B cell (primary cell): ENCODE measurements at regions of chr12 and their contacts with region 1.

Region 1: DNA sequence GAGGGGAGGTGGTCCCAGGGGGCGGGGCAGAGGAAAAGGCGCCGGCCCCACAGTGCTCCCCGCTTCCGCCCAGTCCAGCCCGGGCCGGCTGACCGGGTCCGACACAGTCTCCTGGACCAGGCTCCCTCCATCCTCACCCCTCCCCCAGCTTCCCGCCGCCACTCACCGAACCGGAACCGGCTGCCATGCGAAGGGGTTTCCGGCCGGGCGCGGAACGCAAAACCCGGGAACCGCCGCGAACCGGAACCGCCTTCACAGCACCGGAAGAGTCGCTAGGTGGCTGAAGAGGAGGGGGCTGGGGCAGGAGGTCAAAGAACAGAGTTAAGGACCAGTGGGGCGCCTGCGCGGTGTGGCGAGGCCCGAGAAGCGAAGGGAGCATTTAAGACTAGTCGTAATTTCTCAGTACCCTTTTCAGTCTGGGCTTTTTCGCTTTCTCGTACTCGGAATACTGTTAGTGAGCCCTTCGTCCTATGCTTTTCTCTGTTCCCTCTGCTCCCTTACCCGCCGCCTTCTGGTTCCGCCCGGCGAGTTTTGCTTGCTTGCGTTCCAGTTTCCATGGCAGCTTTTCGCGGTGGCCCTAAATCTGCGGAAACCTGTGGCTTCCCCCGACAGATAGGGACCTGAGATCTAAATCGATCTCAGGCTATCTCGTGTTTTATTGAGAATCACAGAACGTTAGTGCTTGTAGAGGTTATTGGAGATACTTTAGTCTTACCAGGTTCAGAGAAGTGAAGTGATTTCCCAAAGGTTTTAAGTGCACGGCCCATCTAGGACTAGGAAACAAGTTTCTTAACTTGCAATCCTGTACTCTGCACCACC is at the start of gene SENP1:
- DNase-seq: peak; percentile 96
- ATAC-seq: peak; percentile 78
- H3K4me3 ChIP-seq: peak within 1 kb of the TSS; percentile 61 to 94 (median 80)
- H3K4me3 Mint-ChIP-seq: peak within 1 kb of the TSS; percentile 89
- H3K27ac ChIP-seq: peak within 1 kb of the TSS; percentile 93 to 99
- H3K27ac Mint-ChIP-seq: peak within 1 kb of the TSS; percentile 95
- H3K4me1 ChIP-seq: peaks cover 20% of the 10 kb centered on the region in 2 donors
- H3K4me1 Mint-ChIP-seq: peaks cover 38% of the 10 kb centered on the region
- H3K27me3 ChIP-seq: no peaks in the 10 kb centered on the region
- H3K27me3 Mint-ChIP-seq: no peaks in the 10 kb centered on the region
- CTCF ChIP-seq: peak; percentile 28
- total RNA-seq, gene SENP1: 43.8 and 44.8 TPM in 2 replicates

Region 2: DNA sequence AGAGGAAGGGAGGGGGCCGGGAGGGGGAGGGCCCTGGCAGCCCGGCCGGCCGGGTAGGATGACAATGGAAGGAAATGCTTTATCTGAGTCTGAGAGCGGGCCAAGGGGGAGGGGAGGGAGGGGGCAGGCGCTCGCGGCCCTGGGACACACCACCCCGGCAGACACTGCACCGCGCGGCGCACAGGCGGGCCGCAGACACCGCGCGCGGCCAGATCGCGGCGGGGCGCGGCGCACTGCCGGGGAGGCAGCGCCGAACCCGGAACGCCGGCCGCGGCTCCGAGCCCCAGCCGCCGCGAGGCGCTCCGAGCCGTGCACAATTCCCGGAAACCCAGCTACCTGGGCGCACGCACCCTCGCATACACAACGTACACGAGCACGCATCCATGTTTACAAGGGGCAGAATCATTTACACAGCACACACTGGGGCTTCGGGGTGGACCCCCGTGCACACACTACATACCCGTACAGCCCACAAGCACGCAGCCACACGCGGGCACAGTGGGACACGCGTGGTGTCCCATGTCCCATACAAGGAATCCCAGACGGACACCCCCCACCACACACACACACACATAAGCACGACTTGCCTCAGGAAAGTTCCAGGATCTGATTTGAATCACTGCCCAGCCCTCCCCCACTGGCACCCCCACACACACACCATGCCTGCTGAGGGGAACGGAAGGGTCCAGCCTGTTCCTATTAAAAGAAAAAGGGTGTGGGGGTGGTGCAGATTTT is 286.0 kb before region 1 on chr12 and contains the start of gene HDAC7:
- CTCF ChIA-PET with region 1: no interaction called
- POLR2A ChIA-PET with region 1: no interaction called
- intact Hi-C with region 1: loop called (anchors 5 kb)
- DNase-seq: peak; percentile 82
- ATAC-seq: peak; percentile 74
- H3K4me3 ChIP-seq: peak within 1 kb of the TSS; percentile 58 to 76 (median 73)
- H3K4me3 Mint-ChIP-seq: peak within 1 kb of the TSS; percentile 96
- H3K27ac ChIP-seq: peak within 1 kb of the TSS; percentile 67 to 96
- H3K27ac Mint-ChIP-seq: peak within 1 kb of the TSS; percentile 97
- H3K4me1 ChIP-seq: peaks cover 51 to 64% of the 10 kb centered on the region in 2 donors
- H3K4me1 Mint-ChIP-seq: peaks cover 67% of the 10 kb centered on the region
- H3K27me3 ChIP-seq: no peaks in the 10 kb centered on the region
- H3K27me3 Mint-ChIP-seq: no peaks in the 10 kb centered on the region
- CTCF ChIP-seq: no peak
- total RNA-seq, gene HDAC7: 175 and 178 TPM in 2 replicates

Region 3: DNA sequence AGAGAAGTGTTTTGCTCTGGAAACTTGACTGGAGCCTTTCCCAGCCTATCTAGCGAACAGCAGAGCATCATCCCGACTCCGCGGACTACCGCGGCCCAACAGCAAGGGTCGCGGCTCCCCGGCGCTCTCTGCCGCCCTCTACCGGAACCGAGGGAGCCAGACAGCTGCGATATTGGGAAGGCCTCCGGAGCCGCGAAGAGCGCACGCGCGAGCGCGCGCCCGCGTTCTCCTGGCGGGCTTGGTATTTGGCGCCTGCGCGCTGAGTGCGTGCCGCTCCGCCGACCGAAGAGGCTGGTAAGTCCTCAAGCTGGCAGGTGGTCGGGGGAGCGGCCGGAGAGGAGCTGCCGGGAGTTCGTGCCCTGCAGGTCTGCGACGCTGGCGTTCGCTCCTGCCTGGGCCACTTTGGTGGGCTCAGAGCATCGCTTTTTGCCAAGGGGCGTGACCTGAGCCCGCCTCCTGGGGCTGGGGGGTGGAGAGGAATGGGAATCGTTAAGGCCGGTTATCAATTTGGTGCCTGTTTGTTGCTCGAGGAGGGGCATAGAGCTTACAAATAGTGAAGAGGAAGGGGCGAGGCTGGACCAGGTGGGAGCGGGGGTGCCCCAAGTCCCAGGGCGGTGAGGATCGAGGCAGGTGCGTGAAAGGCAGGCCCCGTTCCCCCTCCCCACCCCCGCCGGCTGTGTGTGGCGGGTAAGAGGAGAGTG is 142.6 kb before region 1 on chr12 and contains the start of gene TMEM106C:
- CTCF ChIA-PET with region 1: no interaction called
- POLR2A ChIA-PET with region 1: no interaction called
- intact Hi-C with region 1: loop called (anchors 5 kb)
- DNase-seq: peak; percentile 97
- ATAC-seq: peak; percentile 99
- H3K4me3 ChIP-seq: peak within 1 kb of the TSS; percentile 68 to 96 (median 75)
- H3K4me3 Mint-ChIP-seq: peak within 1 kb of the TSS; percentile 96
- H3K27ac ChIP-seq: peak within 1 kb of the TSS; percentile 17 to 67
- H3K27ac Mint-ChIP-seq: peak within 1 kb of the TSS; percentile 86
- H3K4me1 ChIP-seq: peaks cover 6 to 14% of the 10 kb centered on the region in 2 donors
- H3K4me1 Mint-ChIP-seq: peaks cover 25% of the 10 kb centered on the region
- H3K27me3 ChIP-seq: no peaks in the 10 kb centered on the region
- H3K27me3 Mint-ChIP-seq: peaks cover 16% of the 10 kb centered on the region
- CTCF ChIP-seq: peak; percentile 94
- total RNA-seq, gene TMEM106C: 32.9 and 37.5 TPM in 2 replicates

Region 4: GRCh38 chr12:48037267-48037915 is 68.7 kb before region 1 on chr12:
- CTCF ChIA-PET with region 1: no interaction called
- POLR2A ChIA-PET with region 1: no interaction called
- intact Hi-C with region 1: no loop called
- DNase-seq: no peak
- ATAC-seq: no peak
- H3K4me3 ChIP-seq: no peak overlapping the region
- H3K4me3 Mint-ChIP-seq: no peak overlapping the region
- H3K27ac ChIP-seq: no peak overlapping the region
- H3K27ac Mint-ChIP-seq: no peak overlapping the region
- H3K4me1 ChIP-seq: peaks cover 5 to 13% of the 10 kb centered on the region in 2 donors
- H3K4me1 Mint-ChIP-seq: peaks cover 20% of the 10 kb centered on the region
- H3K27me3 ChIP-seq: no peaks in the 10 kb centered on the region
- H3K27me3 Mint-ChIP-seq: no peaks in the 10 kb centered on the region
- CTCF ChIP-seq: no peak

Region 5: GRCh38 chr12:48060474-48060873 is 45.6 kb before region 1 on chr12:
- CTCF ChIA-PET with region 1: no interaction called
- POLR2A ChIA-PET with region 1: no interaction called
- intact Hi-C with region 1: no loop called
- DNase-seq: no peak
- ATAC-seq: no peak
- H3K4me3 ChIP-seq: no peak overlapping the region
- H3K4me3 Mint-ChIP-seq: no peak overlapping the region
- H3K27ac ChIP-seq: no peak overlapping the region
- H3K27ac Mint-ChIP-seq: no peak overlapping the region
- H3K4me1 ChIP-seq: no peaks in the 10 kb centered on the region
- H3K4me1 Mint-ChIP-seq: no peaks in the 10 kb centered on the region
- H3K27me3 ChIP-seq: no peaks in the 10 kb centered on the region
- H3K27me3 Mint-ChIP-seq: no peaks in the 10 kb centered on the region
- CTCF ChIP-seq: no peak

Region 6: GRCh38 chr12:48071808-48072207 is 34.3 kb before region 1 on chr12:
- CTCF ChIA-PET with region 1: no interaction called
- POLR2A ChIA-PET with region 1: interaction called, 12 read pairs
- intact Hi-C with region 1: no loop called
- DNase-seq: no peak
- ATAC-seq: no peak
- H3K4me3 ChIP-seq: no peak overlapping the region
- H3K4me3 Mint-ChIP-seq: no peak overlapping the region
- H3K27ac ChIP-seq: no peak overlapping the region
- H3K27ac Mint-ChIP-seq: no peak overlapping the region
- H3K4me1 ChIP-seq: no peaks in the 10 kb centered on the region
- H3K4me1 Mint-ChIP-seq: no peaks in the 10 kb centered on the region
- H3K27me3 ChIP-seq: no peaks in the 10 kb centered on the region
- H3K27me3 Mint-ChIP-seq: no peaks in the 10 kb centered on the region
- CTCF ChIP-seq: no peak

Region 7: GRCh38 chr12:48119078-48119833 is 13.2 kb after region 1 on chr12 and contains the start of gene PFKM:
- CTCF ChIA-PET with region 1: interaction called, 18 read pairs
- POLR2A ChIA-PET with region 1: interaction called, 3 read pairs
- intact Hi-C with region 1: loop called (anchors 1 kb)
- DNase-seq: peak; percentile 81
- ATAC-seq: peak; percentile 99
- H3K4me3 ChIP-seq: peak within 1 kb of the TSS; percentile 73 to 94 (median 86)
- H3K4me3 Mint-ChIP-seq: peak within 1 kb of the TSS; percentile 96
- H3K27ac ChIP-seq: peak within 1 kb of the TSS; percentile 21 to 62
- H3K27ac Mint-ChIP-seq: peak within 1 kb of the TSS; percentile 85
- H3K4me1 ChIP-seq: peaks cover 7 to 12% of the 10 kb centered on the region in 2 donors
- H3K4me1 Mint-ChIP-seq: peaks cover 19% of the 10 kb centered on the region
- H3K27me3 ChIP-seq: no peaks in the 10 kb centered on the region
- H3K27me3 Mint-ChIP-seq: no peaks in the 10 kb centered on the region
- CTCF ChIP-seq: no peak
- total RNA-seq, gene PFKM: 42.5 and 43.0 TPM in 2 replicates

Region 8: GRCh38 chr12:48157018-48157888 is 51.2 kb after region 1 on chr12 and contains the start of gene ASB8:
- CTCF ChIA-PET with region 1: interaction called, 28 read pairs
- POLR2A ChIA-PET with region 1: interaction called, 10 read pairs
- intact Hi-C with region 1: loop called (anchors 1 kb)
- DNase-seq: peak; percentile 99
- ATAC-seq: peak; percentile 91
- H3K4me3 ChIP-seq: peak within 1 kb of the TSS; percentile 81 to 98 (median 88)
- H3K4me3 Mint-ChIP-seq: peak within 1 kb of the TSS; percentile 99
- H3K27ac ChIP-seq: peak within 1 kb of the TSS; percentile 67 to 84
- H3K27ac Mint-ChIP-seq: peak within 1 kb of the TSS; percentile 99
- H3K4me1 ChIP-seq: peaks cover 14 to 15% of the 10 kb centered on the region in 2 donors
- H3K4me1 Mint-ChIP-seq: peaks cover 21% of the 10 kb centered on the region
- H3K27me3 ChIP-seq: no peaks in the 10 kb centered on the region
- H3K27me3 Mint-ChIP-seq: no peaks in the 10 kb centered on the region
- CTCF ChIP-seq: peak; percentile 64
- total RNA-seq, gene ASB8: 53.2 and 54.8 TPM in 2 replicates

Region 9: DNA sequence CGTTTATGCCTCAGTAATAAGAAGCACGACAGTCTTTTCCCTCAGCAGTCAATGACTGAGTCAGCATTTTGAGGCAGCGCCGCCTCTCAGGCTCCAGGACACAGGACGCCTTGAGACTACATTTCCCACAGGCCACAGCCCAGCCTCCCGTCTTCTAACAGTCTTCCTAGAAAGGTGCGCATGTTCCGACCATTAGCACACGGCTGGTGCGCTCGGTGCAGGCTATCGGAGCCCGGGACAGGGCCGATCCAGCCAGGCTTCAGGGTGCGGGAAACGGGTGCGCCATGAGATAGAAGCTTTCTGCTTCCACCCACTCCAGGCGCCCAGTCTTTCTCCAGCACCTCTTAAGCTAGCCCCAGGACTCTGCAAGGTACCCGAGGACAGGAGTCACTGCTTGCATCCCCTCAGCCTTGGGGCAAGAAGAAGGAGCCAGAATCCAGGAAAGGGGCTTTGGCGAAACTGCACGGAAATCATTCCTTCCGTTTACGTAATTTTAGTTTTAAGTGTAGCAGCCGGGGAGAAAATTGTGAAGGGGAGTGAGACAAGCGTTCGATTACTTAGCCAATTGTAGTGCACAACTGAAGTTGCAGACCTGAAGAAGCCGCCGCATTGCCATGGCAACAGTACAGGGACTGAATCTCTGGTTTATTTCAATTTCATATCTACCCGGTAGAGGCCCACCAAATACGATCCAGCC is 190.7 kb after region 1 on chr12:
- CTCF ChIA-PET with region 1: no interaction called
- POLR2A ChIA-PET with region 1: no interaction called
- intact Hi-C with region 1: no loop called
- DNase-seq: peak; percentile 11
- ATAC-seq: peak; percentile 47
- H3K4me3 ChIP-seq: peak overlapping the region in 3 of 5 experiments; percentile 36 to 59 (median 46)
- H3K4me3 Mint-ChIP-seq: peak overlapping the region; percentile 69
- H3K27ac ChIP-seq: no peak overlapping the region
- H3K27ac Mint-ChIP-seq: no peak overlapping the region
- H3K4me1 ChIP-seq: peaks cover 0 to 8% of the 10 kb centered on the region in 2 donors
- H3K4me1 Mint-ChIP-seq: peaks cover 10% of the 10 kb centered on the region
- H3K27me3 ChIP-seq: peaks cover 0 to 11% (median 7%) of the 10 kb centered on the region in 4 experiments
- H3K27me3 Mint-ChIP-seq: peaks cover 29% of the 10 kb centered on the region
- CTCF ChIP-seq: no peak

Region 10: GRCh38 chr12:48716493-48717251 is 610.6 kb after region 1 on chr12 and contains the start of gene CCNT1:
- CTCF ChIA-PET with region 1: no interaction called
- POLR2A ChIA-PET with region 1: no interaction called
- intact Hi-C with region 1: loop called (anchors 2 kb)
- DNase-seq: peak; percentile 100
- ATAC-seq: peak; percentile 91
- H3K4me3 ChIP-seq: peak within 1 kb of the TSS; percentile 82 to 98 (median 95)
- H3K4me3 Mint-ChIP-seq: peak within 1 kb of the TSS; percentile 88
- H3K27ac ChIP-seq: peak within 1 kb of the TSS; percentile 95 to 96
- H3K27ac Mint-ChIP-seq: peak within 1 kb of the TSS; percentile 97
- H3K4me1 ChIP-seq: peaks cover 19 to 27% of the 10 kb centered on the region in 2 donors
- H3K4me1 Mint-ChIP-seq: peaks cover 34% of the 10 kb centered on the region
- H3K27me3 ChIP-seq: no peaks in the 10 kb centered on the region
- H3K27me3 Mint-ChIP-seq: peaks cover 4% of the 10 kb centered on the region
- CTCF ChIP-seq: no peak
- total RNA-seq, gene CCNT1: 73.1 and 77.3 TPM in 2 replicates